ENCODE measurements at regions of chr11 and their contacts with region 1.

Region 1: DNA sequence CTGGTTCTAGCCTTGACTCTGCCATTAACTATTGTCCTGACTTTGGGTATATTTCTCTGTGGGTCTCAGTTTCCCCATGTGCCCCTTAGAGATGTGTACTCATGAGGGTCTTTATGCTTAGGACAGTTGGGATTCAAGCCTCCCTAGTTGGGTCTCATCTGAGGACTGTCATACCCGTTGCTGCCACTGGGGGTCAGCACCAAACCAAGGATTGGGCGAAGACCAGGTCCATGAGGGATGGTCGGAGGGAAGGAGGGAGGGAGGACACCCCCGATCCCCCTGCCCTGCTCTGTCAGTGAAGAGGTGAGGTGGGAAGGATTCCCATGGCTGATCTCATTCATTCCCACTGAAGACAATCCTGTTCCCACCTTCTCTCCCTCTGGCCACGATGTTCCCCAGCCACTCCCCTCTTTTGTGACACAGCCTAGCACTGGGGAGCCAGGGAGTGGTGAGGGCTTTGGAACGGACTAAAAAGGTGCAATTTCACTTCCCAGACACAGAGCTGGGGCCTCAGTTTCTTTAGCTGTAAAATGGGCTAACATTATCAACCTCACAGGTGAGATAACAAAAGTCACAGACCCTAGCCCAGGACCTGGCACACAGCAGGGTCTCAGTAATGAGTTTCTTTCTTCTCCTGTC is 12.4 kb upstream of the KLHL35 start:
- DNase-seq: peak in 4 of 5 donors; percentile 74 to 81 (median 78)
- H3K4me3 ChIP-seq: no peak overlapping the region
- H3K27ac ChIP-seq: no peak overlapping the region
- H3K4me1 ChIP-seq: no peaks in the 10 kb centered on the region
- H3K27me3 ChIP-seq: peaks cover 2% of the 10 kb centered on the region
- CTCF ChIP-seq: peak; percentile 97

Region 2: GRCh38 chr11:75532200-75533048 is 87.0 kb after region 1 on chr11:
- intact Hi-C with region 1: loop called (anchors 2 kb)
- DNase-seq: peak in 4 of 5 donors; percentile 77 to 86 (median 82)
- H3K4me3 ChIP-seq: no peak overlapping the region
- H3K27ac ChIP-seq: no peak overlapping the region
- H3K4me1 ChIP-seq: no peaks in the 10 kb centered on the region
- H3K27me3 ChIP-seq: no peaks in the 10 kb centered on the region
- CTCF ChIP-seq: peak; percentile 95

Measured in kidney (tissue), 22 donors.